PC-3 (cell line): ENCODE measurements at regions of chr9 and their contacts with region 1.

Region 1: GRCh38 chr9:91865041-91865440 is 85.0 kb downstream of the ROR2 start:
- DNase-seq: no peak
- ATAC-seq: no peak
- H3K4me3 ChIP-seq: no peak overlapping the region
- H3K27ac ChIP-seq: no peak overlapping the region
- H3K4me1 ChIP-seq: no peaks in the 10 kb centered on the region
- H3K27me3 ChIP-seq: peaks cover 58% of the 10 kb centered on the region
- CTCF ChIP-seq: no peak

Region 2: DNA sequence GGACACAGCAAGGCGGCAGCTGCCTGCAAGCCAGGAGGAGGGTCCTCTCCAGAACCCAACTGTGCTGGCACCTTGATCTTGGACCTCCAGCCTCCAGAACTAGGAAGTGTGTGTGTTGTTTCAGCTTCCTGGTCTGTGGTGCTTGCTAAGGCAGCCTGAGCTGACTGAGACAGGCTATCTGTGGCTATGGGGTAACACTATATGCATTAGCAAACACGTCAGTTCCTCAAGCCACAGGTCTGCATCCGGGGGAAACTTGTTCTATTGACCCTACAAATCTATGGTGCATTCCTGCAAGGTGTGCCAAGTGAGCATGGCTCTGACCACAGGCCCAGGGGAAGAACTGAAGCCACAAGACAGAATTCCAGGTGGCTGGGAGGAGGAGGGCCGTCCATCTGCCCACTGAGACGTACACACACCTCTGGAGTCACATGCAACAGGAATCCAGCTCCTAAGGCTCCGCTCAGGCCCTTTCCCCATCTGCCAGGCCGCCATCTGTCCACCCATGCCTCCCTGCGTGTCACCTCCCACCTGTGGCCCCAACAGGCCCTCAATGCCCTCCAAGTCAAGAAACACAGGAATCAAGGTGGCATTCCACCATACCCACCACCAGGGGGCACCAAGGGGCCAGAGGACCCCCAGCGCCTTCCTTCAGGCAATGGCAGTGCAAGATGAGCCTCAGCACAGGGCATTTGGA is 89.9 kb before region 1 on chr9:
- CTCF ChIA-PET with region 1: no interaction called
- POLR2A ChIA-PET with region 1: no interaction called
- intact Hi-C with region 1: loop called (anchors 10 kb)
- DNase-seq: peak; percentile 62
- ATAC-seq: peak; percentile 73
- H3K4me3 ChIP-seq: no peak overlapping the region
- H3K27ac ChIP-seq: no peak overlapping the region
- H3K4me1 ChIP-seq: no peaks in the 10 kb centered on the region
- H3K27me3 ChIP-seq: peaks cover 57% of the 10 kb centered on the region
- CTCF ChIP-seq: peak; percentile 82

Region 3: DNA sequence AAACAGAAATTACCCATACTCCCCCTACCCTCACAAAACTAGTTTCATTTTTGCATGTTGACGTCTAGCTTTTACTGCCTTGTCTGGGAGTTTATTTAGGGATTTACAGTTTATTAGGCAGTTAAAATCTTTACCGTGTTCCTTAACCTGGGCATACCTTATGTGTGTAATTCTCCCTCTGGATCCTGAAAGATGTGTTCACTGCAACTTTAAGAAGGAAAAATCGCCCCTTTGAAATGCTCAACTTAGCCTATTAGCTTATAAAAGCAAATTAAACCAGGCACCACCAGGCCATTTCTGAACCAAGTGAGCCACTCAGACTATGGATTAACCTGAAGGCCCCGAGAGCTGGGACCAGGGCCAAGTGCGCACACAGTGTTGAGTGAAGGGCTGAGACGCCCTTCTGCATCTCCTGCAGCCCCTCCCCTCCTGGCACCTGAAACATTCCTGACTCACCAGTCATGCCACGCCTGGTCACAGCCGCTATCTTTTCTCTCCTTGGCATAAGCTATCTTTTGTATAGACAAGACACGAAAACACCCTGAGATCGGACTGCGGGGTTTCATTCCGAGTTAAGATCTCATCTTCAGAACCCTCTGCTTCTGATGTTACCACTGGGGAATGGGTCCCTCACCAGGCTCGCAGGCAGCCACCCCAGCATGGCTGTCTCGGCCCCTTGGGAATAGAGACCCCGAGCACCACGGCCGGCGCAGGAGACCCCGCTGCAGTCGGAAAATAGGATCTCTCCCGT is 26.9 kb before region 1 on chr9:
- CTCF ChIA-PET with region 1: no interaction called
- POLR2A ChIA-PET with region 1: no interaction called
- intact Hi-C with region 1: no loop called
- DNase-seq: peak; percentile 89
- ATAC-seq: peak; percentile 92
- H3K4me3 ChIP-seq: peak overlapping the region; percentile 64
- H3K27ac ChIP-seq: peak overlapping the region; percentile 76
- H3K4me1 ChIP-seq: peaks cover 15% of the 10 kb centered on the region
- H3K27me3 ChIP-seq: no peaks in the 10 kb centered on the region
- CTCF ChIP-seq: no peak